Vagina (tissue), 2 donors: ENCODE measurements at regions of chr20 and their contacts with region 1.

Region 1: GRCh38 chr20:36773597-36774390 is at the start of gene DSN1:
- DNase-seq: peak; percentile 97 to 99
- H3K4me3 ChIP-seq: peak within 1 kb of the TSS; percentile 54 to 68
- H3K27ac ChIP-seq: peak within 1 kb of the TSS; percentile 99
- H3K4me1 ChIP-seq: peaks cover 22% of the 10 kb centered on the region
- H3K27me3 ChIP-seq: no peaks in the 10 kb centered on the region
- CTCF ChIP-seq: no peak
- POLR2A ChIP-seq: peak in 1 of 2 donors; percentile 76
- total RNA-seq, gene DSN1: 4.7 TPM

Region 2: DNA sequence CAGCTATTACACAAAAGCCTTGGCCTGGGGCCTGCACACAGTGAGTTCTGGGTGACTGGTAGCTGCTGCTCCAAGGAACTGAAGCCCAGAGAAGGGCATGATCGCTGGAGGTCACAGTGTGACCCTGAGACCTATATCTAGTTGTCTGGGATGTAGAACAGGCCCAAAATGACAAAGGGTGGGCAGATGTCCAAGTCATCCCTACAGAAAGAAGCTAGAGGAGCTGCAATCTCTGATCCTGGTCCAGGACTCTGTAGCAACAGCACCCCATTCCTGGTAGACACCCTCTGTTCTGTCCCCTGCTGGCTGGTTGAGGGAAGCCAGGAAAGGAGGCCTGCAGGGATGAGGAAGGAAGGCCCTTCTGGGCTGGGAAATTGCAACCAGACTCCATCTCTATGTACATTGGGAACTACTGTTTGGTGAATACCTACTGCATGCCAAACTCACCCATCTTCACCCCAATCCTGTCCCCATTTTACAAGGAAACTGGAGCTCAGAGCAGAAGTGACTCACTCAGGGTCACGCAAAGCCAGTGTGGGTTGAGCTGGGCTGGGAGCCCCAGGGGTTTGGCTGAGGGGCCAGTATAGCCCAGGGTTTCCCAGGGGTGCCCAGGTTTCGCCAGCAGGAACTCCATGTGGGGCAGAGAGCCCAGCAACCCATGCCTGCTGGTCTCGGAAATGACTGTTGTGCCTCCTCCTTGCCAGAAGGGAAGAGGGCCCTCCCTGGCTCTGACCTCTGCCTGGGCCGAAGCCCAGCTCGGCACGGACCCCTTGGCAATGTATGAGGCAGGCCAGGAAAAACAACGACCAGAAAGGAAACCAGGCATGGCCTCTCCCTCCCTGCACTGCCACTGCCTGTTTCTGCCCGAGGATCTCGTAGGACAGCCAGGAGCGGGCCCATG is 57.2 kb after region 1 on chr20:
- intact Hi-C with region 1: loop called (anchors 5 kb)
- DNase-seq: no peak
- H3K4me3 ChIP-seq: no peak overlapping the region
- H3K27ac ChIP-seq: peak overlapping the region; percentile 91
- H3K4me1 ChIP-seq: peaks cover 57% of the 10 kb centered on the region
- H3K27me3 ChIP-seq: no peaks in the 10 kb centered on the region
- CTCF ChIP-seq: peak in 2 of 3 experiments; percentile 6 to 42
- POLR2A ChIP-seq: no peak